Activated CD4-positive, alpha-beta T cell treated with anti-CD3 and anti-CD28 coated beads for 36 hours (primary cell): ENCODE measurements at regions of chr11 and their contacts with region 1.

Region 1: DNA sequence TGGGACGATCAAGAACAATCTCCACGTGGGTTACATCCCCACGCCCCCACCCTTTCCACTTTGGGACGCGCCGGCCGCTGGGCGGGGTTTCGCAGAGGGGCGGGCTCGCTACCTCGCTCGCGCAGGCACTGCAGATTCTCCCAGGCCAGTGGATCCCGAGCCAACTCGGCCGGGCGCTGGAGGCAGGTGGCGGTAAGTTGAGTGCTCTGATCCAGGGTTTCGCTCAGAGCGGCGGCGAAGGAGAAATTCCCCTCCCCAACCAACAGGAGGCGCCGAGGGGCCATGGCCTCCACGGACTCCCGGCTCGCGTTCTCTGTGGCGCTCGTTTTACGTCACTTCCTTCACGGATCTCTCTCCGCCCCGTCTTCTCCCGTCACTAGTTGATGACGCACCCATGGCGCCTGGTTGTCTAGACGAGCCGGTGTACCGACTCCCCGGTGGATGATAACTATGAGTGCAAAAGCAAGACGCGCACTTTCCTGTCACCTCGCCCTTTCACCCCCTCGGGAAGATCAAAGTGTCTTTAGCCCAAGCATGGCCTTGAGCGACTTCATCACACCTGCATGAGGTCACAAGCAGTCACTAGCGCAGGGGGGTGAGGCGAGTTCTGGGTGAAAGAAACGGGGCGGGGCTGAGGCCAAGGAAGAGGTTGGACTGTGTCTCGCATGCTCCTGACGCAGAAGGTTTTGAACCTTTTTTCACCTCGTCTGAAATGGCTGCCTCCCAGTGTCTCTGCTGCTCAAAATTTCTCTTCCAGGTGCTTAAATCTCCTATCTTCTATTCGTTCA is at the starts of genes CFAP68 and FDXACB1:
- DNase-seq: peak; percentile 97
- ATAC-seq: peak; percentile 92
- H3K4me3 Mint-ChIP-seq: peak within 1 kb of the TSS; percentile 78
- H3K27ac Mint-ChIP-seq: peak within 1 kb of the TSS; percentile 96
- H3K4me1 Mint-ChIP-seq: peaks cover 26% of the 10 kb centered on the region
- H3K27me3 Mint-ChIP-seq: no peaks in the 10 kb centered on the region
- total RNA-seq, gene CFAP68: 32.1 to 49.7 TPM
- total RNA-seq, gene FDXACB1: 5.9 to 6.0 TPM

Region 2: DNA sequence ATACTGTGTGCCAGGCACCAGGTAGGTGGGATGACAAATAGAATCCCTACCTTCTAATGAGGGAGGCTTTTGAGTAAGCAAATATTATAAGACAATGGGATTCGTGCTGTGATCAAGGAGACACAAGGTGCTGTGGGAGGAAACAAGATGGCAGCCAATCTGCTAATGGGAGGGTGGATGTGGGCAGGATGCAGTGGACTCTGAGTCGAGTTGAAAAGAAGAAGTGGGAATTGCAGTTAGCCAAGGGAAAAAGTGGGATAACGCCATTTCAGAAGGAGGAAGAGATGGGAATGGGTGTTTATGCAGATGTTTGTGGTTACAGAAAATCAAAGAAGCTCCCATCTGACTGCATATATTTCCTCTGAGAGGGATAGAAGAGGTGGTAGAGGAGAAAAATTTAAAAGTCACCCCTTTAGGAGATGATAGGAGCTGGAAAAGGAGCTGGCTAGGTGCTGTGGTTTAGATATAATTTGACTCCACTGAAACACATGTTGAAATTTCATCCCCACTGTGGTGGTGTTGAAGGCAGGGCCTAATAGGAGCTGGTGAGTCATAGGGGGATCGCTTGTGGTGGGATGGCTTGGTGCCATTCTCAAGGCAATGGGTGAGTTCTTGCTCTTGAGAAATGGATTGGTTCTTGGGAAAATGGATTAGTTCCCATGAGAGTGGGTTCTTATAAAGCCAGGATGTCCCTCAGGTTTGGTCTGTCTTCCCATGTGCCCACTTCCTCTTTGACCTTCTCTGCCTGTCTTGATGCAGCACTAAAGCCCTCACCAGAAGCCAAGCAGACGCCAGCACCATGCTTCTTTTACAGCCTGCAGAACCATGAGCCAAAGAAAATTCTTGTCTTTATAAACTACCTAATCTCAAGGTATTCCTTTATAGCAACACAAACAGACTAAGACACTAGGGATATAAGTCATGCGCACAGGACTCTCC is 470.0 kb before region 1 on chr11:
- CTCF ChIA-PET with region 1: no interaction called
- POLR2A ChIA-PET with region 1: no interaction called
- intact Hi-C with region 1: no loop called
- DNase-seq: no peak
- ATAC-seq: no peak
- H3K4me3 Mint-ChIP-seq: no peak overlapping the region
- H3K27ac Mint-ChIP-seq: no peak overlapping the region
- H3K4me1 Mint-ChIP-seq: peaks cover 25% of the 10 kb centered on the region
- H3K27me3 Mint-ChIP-seq: no peaks in the 10 kb centered on the region

Region 3: GRCh38 chr11:111766093-111766833 is 112.8 kb before region 1 on chr11 and contains the start of gene PPP2R1B:
- CTCF ChIA-PET with region 1: no interaction called
- POLR2A ChIA-PET with region 1: interaction called, 3 read pairs
- intact Hi-C with region 1: loop called in 1 of 2 experiments (anchors 2 kb)
- DNase-seq: peak; percentile 85
- ATAC-seq: peak; percentile 95
- H3K4me3 Mint-ChIP-seq: peak within 1 kb of the TSS; percentile 85
- H3K27ac Mint-ChIP-seq: peak within 1 kb of the TSS; percentile 98
- H3K4me1 Mint-ChIP-seq: peaks cover 32% of the 10 kb centered on the region
- H3K27me3 Mint-ChIP-seq: no peaks in the 10 kb centered on the region
- total RNA-seq, gene PPP2R1B: 39.1 to 53.9 TPM

Region 4: GRCh38 chr11:111982019-111982464 is 103.0 kb after region 1 on chr11:
- CTCF ChIA-PET with region 1: interaction called, 6 read pairs
- POLR2A ChIA-PET with region 1: no interaction called
- intact Hi-C with region 1: loop called (anchors 1 to 5 kb)
- DNase-seq: peak; percentile 78
- ATAC-seq: peak; percentile 88
- H3K4me3 Mint-ChIP-seq: no peak overlapping the region
- H3K27ac Mint-ChIP-seq: no peak overlapping the region
- H3K4me1 Mint-ChIP-seq: peaks cover 7% of the 10 kb centered on the region
- H3K27me3 Mint-ChIP-seq: peaks cover 22% of the 10 kb centered on the region

Region 5: GRCh38 chr11:112074026-112074811 is 195.2 kb after region 1 on chr11 and contains the start of gene NKAPD1:
- CTCF ChIA-PET with region 1: interaction called, 6 read pairs
- POLR2A ChIA-PET with region 1: no interaction called
- intact Hi-C with region 1: loop called in 1 of 2 experiments (anchors 1 kb)
- DNase-seq: peak; percentile 86
- ATAC-seq: peak; percentile 92
- H3K4me3 Mint-ChIP-seq: peak within 1 kb of the TSS; percentile 94
- H3K27ac Mint-ChIP-seq: peak within 1 kb of the TSS; percentile 93
- H3K4me1 Mint-ChIP-seq: peaks cover 26% of the 10 kb centered on the region
- H3K27me3 Mint-ChIP-seq: peaks cover 11% of the 10 kb centered on the region
- total RNA-seq, gene NKAPD1: 23.7 to 45.3 TPM

Region 6: DNA sequence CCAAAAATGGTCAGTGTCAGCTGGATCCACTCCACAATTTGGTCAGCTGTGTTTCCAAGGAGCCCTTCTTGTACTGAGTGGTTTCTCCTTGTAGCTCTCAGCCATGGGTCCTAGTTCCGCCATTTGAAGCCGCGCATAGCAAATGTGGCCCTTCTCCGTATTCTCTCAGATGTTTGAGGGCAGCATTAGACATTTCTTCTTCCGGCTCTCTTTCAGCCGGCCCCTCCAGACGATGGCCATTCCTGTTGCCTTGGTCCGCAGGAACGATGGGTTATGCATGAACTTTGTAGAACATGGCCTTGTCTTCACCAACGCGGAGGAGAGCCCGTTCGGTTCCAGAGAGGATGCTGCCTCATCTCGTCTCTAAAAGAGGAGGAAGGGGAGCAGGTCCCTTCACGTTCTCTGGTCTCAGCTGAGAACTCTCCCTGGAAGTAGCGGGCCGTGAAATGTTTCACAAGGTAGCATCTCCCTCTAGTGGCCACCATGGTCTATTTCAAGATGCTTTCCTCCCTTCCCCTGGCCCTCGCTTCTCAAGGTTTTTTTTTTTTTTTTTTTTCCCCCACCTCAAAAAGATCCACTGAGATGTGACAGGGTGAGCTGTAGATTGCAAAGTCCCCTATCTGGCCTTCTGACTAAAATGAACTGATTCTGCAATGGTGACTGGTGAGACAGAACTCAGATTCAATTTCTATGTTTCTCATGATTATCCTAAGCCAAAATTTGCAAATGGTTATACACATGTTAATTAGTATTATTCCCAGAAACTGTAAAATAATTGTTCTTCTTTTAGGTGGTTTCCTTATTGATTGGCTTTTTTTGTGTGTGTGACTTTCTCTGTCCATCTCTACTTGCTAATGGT is 401.5 kb after region 1 on chr11:
- CTCF ChIA-PET with region 1: interaction called, 3 read pairs
- POLR2A ChIA-PET with region 1: no interaction called
- intact Hi-C with region 1: loop called in 1 of 2 experiments (anchors 1 kb)
- DNase-seq: peak; percentile 77
- ATAC-seq: peak; percentile 92
- H3K4me3 Mint-ChIP-seq: peak overlapping the region; percentile 82
- H3K27ac Mint-ChIP-seq: peak overlapping the region; percentile 76
- H3K4me1 Mint-ChIP-seq: peaks cover 14% of the 10 kb centered on the region
- H3K27me3 Mint-ChIP-seq: no peaks in the 10 kb centered on the region